Astrocyte of the cerebellum (primary cell): ENCODE measurements at regions of chr15 and their contacts with region 1.

Region 1: GRCh38 chr15:77126529-77127326 is 55.8 kb upstream of the TSPAN3 start:
- DNase-seq: no peak
- H3K4me3 ChIP-seq: no peak overlapping the region
- CTCF ChIP-seq: no peak

Region 2: GRCh38 chr15:77538027-77538451 is 411.3 kb after region 1 on chr15:
- in situ Hi-C with region 1: loop called (anchors 10 kb)
- DNase-seq: no peak
- H3K4me3 ChIP-seq: no peak overlapping the region
- CTCF ChIP-seq: no peak